PC-9 (cell line): ENCODE measurements at regions of chr9 and their contacts with region 1.

Region 1: DNA sequence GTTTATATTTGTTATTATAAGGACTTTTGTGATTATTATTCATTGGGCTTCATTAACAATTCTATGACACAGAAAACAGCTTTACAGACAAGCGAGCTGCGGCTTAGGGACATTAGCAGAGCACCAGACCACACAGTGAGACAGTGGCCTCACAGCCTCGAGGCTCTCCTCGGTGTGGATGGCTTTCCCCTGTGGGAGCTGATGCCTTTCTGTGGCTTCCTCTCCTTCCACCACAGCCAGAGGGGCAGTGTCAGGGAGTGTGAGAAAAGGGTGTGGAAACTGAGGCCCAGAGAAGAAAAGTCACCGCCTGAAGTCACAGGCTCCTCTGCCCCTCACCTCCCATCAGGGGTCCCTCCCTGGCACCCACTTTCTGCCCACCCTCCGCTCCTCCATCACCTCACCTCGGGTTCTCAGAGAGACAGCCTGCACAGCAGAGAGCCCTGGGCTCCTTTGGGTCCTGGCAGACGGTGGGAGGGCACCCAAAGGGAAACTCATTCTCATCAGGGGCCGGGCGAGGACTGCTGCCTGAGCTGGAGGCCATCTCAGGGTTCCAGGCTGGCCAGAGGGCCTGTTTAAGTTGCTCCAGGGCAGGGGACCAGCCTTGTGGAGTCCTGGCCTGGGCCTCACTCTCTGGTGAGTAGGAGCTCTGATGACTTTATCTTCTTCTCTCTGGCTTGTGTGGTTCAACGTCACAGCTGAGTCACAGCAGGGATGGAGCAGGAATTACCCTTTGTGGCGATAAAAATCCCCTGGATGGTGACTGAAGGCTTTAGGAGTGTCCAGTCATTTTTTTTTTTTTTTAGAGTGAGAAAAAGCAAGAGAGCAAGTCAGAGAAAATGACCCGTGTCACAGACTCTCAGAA is 830 bp downstream of the TRAF1 start:
- DNase-seq: peak in 1 of 2 experiments; percentile 23
- H3K4me3 ChIP-seq: no peak overlapping the region
- H3K27ac ChIP-seq: no peak overlapping the region
- H3K4me1 ChIP-seq: peaks cover 7% of the 10 kb centered on the region
- H3K27me3 ChIP-seq: no peaks in the 10 kb centered on the region
- CTCF ChIP-seq: no peak

Region 2: GRCh38 chr9:120655005-120655622 is 270.7 kb before region 1 on chr9:
- CTCF ChIA-PET with region 1: no interaction called
- POLR2A ChIA-PET with region 1: interaction called, 23 read pairs
- intact Hi-C with region 1: no loop called
- DNase-seq: peak; percentile 6 to 55
- H3K4me3 ChIP-seq: no peak overlapping the region
- H3K27ac ChIP-seq: 0 out of 2 replicates have a peak overlapping the region, but pooled peaks have one; percentile 0
- H3K4me1 ChIP-seq: peaks cover 17% of the 10 kb centered on the region
- H3K27me3 ChIP-seq: no peaks in the 10 kb centered on the region
- CTCF ChIP-seq: no peak

Region 3: DNA sequence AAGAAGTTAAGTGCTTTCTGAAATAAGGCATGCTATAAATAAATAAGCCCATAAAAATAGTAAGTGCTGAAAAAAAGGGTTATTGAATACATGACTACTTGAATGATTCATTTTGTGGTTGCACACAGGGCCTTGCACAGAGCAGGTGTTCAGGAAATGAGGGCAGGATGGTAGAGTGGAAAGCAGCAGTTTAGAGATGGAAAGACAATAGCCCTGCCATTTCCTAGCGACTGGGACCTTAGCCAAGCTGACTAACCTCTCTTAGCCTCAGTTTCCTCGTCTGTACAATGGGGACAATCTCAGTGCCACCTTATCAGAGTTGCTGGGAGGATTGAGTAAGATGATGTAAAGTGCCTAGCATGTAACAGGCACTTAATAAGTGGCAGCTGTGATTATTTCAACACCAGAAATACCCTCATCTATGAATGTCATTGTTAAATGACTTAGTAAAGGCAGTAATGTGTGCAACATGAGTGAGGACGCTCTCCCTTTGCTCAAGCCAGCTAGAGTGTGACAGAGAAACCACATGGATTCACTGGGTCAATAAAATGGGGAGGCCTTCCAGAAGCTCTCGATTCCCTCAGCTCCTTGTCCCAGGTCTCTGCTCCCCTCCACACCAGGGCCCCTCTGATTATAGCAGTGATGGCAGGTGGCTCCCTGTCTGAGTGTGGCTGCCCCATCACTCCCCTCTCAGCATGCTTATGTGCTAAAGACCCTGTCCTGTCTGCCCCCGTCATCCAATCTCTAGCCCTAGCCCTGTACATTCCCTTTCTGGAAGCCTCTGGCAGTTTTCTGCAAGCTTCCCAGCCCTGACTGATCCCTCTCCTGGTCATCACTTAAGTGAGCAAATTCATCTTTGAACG is 32.8 kb before region 1 on chr9:
- CTCF ChIA-PET with region 1: no interaction called
- POLR2A ChIA-PET with region 1: no interaction called
- intact Hi-C with region 1: no loop called
- DNase-seq: peak in 1 of 2 experiments; percentile 76
- H3K4me3 ChIP-seq: no peak overlapping the region
- H3K27ac ChIP-seq: no peak overlapping the region
- H3K4me1 ChIP-seq: peaks cover 10% of the 10 kb centered on the region
- H3K27me3 ChIP-seq: no peaks in the 10 kb centered on the region
- CTCF ChIP-seq: no peak

Region 4: GRCh38 chr9:121201738-121202533 is 276.2 kb after region 1 on chr9 and contains the start of gene RAB14:
- CTCF ChIA-PET with region 1: no interaction called
- POLR2A ChIA-PET with region 1: no interaction called
- intact Hi-C with region 1: no loop called
- DNase-seq: peak; percentile 90 to 100
- H3K4me3 ChIP-seq: peak within 1 kb of the TSS; percentile 92
- H3K27ac ChIP-seq: peak within 1 kb of the TSS; percentile 67
- H3K4me1 ChIP-seq: peaks cover 28% of the 10 kb centered on the region
- H3K27me3 ChIP-seq: no peaks in the 10 kb centered on the region
- CTCF ChIP-seq: peak; percentile 59
- total RNA-seq, gene RAB14: 58.1 and 82.6 TPM in 2 replicates

Region 5: GRCh38 chr9:121303456-121304451 is 378.0 kb after region 1 on chr9:
- CTCF ChIA-PET with region 1: interaction called, 11 read pairs
- POLR2A ChIA-PET with region 1: no interaction called
- intact Hi-C with region 1: no loop called
- DNase-seq: peak in 1 of 2 experiments; percentile 48
- H3K4me3 ChIP-seq: no peak overlapping the region
- H3K27ac ChIP-seq: no peak overlapping the region
- H3K4me1 ChIP-seq: peaks cover 15% of the 10 kb centered on the region
- H3K27me3 ChIP-seq: no peaks in the 10 kb centered on the region
- CTCF ChIP-seq: no peak